ENCODE measurements at regions of chr2 and their contacts with region 1.

Region 1: DNA sequence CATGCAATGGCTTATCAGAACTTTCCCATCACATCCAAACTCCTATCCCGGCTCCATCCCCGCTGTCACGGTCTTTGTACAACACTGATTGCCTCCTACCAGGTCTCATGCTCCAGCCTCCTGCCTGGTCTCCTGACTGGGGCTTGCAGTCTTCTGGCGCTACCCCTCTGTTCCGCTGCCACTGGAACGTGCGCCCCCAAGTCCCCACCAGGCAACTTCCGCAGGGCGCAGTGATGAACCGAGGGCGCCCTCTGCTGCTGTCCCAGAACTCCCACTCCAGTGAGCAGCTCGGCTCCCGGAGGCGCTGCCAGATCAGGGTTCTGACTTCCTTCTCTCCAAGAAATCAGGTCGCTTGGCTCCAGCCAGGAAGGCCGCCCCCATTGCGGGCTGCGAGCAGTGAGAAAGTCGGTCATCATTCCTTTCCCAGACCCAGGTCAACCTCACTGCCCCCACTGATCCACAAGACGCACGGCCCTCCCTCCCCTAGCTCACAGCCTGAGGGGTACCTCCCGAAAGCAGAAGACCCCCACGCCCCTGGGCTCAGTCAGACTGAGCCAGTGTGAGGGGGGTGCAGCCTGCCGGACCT is 43.9 kb upstream of the RAB11FIP5 start:
- DNase-seq: peak; percentile 78 to 91
- ATAC-seq: peak; percentile 91
- H3K4me3 ChIP-seq: no peak overlapping the region
- H3K27ac ChIP-seq: no peak overlapping the region
- H3K4me1 ChIP-seq: no peaks in the 10 kb centered on the region
- H3K27me3 ChIP-seq: no peaks in the 10 kb centered on the region

Region 2: GRCh38 chr2:73117441-73117840 is 39.2 kb before region 1 on chr2:
- intact Hi-C with region 1: loop called in 1 of 2 experiments (anchors 5 kb)
- DNase-seq: no peak
- ATAC-seq: no peak
- H3K4me3 ChIP-seq: no peak overlapping the region
- H3K27ac ChIP-seq: no peak overlapping the region
- H3K4me1 ChIP-seq: no peaks in the 10 kb centered on the region
- H3K27me3 ChIP-seq: no peaks in the 10 kb centered on the region

Region 3: DNA sequence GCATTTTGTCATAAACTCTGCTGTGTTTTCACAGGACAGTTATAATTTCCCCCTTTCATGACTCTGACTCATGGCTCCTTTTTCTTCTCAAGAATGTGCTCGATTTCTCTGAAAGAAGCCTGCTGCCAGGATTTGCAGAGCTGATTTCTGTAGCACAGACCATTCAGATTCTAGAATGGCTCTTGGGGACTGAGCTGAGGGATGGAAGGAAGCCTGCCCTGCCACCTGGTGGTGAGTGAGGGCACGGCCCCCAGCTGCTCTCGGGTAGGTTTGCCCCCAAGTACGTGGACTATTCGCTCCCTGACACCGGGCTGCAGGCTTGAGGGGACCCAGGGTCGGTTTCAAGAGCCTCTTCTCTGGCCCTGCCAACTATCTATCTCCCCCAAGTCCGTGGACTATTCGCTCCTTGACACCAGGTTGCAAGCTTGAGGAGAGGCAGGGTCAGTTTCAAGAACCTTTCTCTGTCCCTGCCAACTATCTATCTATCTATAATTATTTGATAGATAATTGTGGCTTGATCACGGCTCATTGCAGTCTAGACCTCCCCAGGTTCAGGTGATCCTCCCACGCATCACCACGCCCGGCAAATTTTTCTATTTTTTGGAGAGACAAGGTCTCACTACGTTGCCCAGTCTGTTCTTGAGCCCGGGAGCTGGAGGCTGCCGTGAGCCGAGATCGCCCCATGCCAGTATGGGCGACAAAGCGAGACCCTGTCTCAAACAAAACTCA is 56.0 kb after region 1 on chr2:
- intact Hi-C with region 1: loop called in 1 of 2 experiments (anchors 2 kb)
- DNase-seq: peak; percentile 83 to 90
- ATAC-seq: peak; percentile 90
- H3K4me3 ChIP-seq: no peak overlapping the region
- H3K27ac ChIP-seq: peak overlapping the region; percentile 38 to 85
- H3K4me1 ChIP-seq: no peaks in the 10 kb centered on the region
- H3K27me3 ChIP-seq: no peaks in the 10 kb centered on the region

Region 4: DNA sequence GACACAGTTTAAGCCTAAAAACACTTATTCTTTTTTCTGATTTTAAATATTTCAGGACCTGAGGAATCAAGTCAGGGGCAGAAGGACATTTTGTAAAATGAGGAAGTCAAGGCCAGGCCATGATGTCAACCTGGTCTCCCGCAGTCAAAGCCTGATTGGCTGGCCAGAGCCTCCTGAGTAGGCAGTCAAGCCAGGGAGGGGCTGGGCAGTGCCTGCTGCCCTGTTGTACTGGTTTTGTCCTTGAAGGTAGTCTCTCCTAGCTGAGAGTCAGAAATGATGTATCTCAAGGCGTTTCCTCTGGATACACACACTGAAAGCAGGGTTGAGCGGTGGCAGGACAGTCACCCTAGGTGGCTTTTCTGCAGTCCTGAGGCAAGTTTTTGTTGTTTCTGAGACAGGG is 97.3 kb after region 1 on chr2:
- intact Hi-C with region 1: no loop called
- DNase-seq: no peak
- ATAC-seq: no peak
- H3K4me3 ChIP-seq: no peak overlapping the region
- H3K27ac ChIP-seq: no peak overlapping the region
- H3K4me1 ChIP-seq: no peaks in the 10 kb centered on the region
- H3K27me3 ChIP-seq: no peaks in the 10 kb centered on the region